PC-9 (cell line): ENCODE measurements at regions of chr14 and their contacts with region 1.

Region 1: DNA sequence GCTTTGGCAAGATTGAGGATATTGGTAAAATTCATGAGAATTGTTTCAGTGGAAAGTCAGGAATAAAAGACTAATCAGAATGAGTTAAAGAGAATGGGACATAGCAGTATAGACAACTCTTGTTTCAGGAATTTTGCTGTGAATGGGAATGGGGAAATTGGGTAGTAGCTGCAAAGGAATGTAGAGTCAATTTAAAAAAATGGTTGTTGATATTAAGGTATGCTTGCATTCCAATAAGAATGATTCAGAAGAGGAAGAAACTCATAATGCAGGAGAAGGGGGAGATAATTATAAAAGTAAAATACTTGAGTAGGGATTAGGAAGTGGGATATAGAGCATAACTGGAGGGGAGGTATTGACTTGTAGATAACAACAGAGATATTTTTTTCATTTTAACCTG is 40.7 kb downstream of the MNAT1 start:
- DNase-seq: peak; percentile 5 to 94
- H3K4me3 ChIP-seq: no peak overlapping the region
- H3K27ac ChIP-seq: peak overlapping the region; percentile 71
- H3K4me1 ChIP-seq: peaks cover 30% of the 10 kb centered on the region
- H3K27me3 ChIP-seq: no peaks in the 10 kb centered on the region
- CTCF ChIP-seq: no peak

Region 2: GRCh38 chr14:60760653-60761364 is 14.5 kb before region 1 on chr14:
- CTCF ChIA-PET with region 1: no interaction called
- POLR2A ChIA-PET with region 1: no interaction called
- intact Hi-C with region 1: loop called (anchors 1 kb)
- DNase-seq: peak; percentile 42 to 85
- H3K4me3 ChIP-seq: no peak overlapping the region
- H3K27ac ChIP-seq: peak overlapping the region; percentile 59
- H3K4me1 ChIP-seq: peaks cover 60% of the 10 kb centered on the region
- H3K27me3 ChIP-seq: no peaks in the 10 kb centered on the region
- CTCF ChIP-seq: no peak